CD8-positive, alpha-beta T cell (primary cell): ENCODE measurements at regions of chr1 and their contacts with region 1.

Region 1: DNA sequence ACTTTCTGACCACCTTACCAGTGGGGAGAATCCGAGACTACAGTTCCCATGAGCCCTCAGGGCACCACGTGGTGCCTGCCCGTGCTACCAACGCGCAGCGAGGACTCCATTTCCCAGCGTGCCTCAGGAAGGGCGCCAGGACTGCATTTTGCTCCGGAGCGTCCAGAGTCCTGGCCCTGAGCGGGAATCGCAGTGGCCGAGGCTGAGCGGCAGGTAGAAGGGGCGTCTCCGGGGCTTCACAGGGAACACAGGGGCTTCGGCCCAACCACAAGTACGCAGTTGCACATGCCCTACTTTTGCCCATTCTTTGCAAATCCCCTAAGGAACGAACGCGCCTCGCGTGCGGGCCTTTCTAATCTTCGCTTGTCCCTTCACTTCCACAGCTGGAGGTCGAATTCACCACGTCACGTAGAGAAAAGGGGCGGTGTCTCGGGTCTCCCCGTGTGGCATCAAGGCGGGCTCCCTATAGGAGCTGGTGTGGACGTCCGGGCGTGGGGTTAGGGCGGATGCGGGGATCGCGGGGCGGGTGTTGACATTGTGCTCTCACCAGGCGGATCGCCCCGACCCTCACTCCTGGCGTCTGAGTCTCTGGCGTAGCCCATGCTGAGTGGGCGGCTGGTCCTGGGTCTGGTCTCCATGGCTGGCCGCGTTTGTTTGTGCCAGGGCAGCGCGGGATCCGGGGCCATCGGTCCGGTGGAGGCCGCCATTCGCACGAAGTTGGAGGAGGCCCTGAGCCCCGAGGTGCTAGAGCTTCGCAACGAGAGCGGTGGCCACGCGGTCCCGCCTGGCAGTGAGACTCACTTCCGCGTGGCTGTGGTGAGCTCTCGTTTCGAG is at the start of gene BOLA1:
- DNase-seq: peak; percentile 56 to 91 (median 85)
- ATAC-seq: peak; percentile 96
- H3K4me3 ChIP-seq: peak within 1 kb of the TSS; percentile 67 to 73
- H3K4me3 Mint-ChIP-seq: peak within 1 kb of the TSS; percentile 89
- H3K27ac ChIP-seq: peak within 1 kb of the TSS; percentile 66 to 82
- H3K27ac Mint-ChIP-seq: peak within 1 kb of the TSS; percentile 92
- H3K4me1 ChIP-seq: peaks cover 11% of the 10 kb centered on the region
- H3K4me1 Mint-ChIP-seq: peaks cover 18% of the 10 kb centered on the region
- H3K27me3 ChIP-seq: no peaks in the 10 kb centered on the region
- H3K27me3 Mint-ChIP-seq: no peaks in the 10 kb centered on the region
- CTCF ChIP-seq: no peak
- total RNA-seq, gene BOLA1: 3.3 to 4.0 TPM

Region 2: GRCh38 chr1:149844101-149844500 is 55.6 kb before region 1 on chr1:
- CTCF ChIA-PET with region 1: no interaction called
- POLR2A ChIA-PET with region 1: no interaction called
- intact Hi-C with region 1: no loop called
- DNase-seq: peak in 4 of 9 experiments; percentile 13 to 56 (median 30)
- ATAC-seq: no peak
- H3K4me3 ChIP-seq: peak overlapping the region; percentile 49 to 57
- H3K4me3 Mint-ChIP-seq: peak overlapping the region; percentile 85
- H3K27ac ChIP-seq: peak overlapping the region; percentile 43 to 62
- H3K27ac Mint-ChIP-seq: peak overlapping the region; percentile 93
- H3K4me1 ChIP-seq: peaks cover 43% of the 10 kb centered on the region
- H3K4me1 Mint-ChIP-seq: peaks cover 51% of the 10 kb centered on the region
- H3K27me3 ChIP-seq: no peaks in the 10 kb centered on the region
- H3K27me3 Mint-ChIP-seq: no peaks in the 10 kb centered on the region
- CTCF ChIP-seq: no peak

Region 3: GRCh38 chr1:149917571-149918144 is 18.0 kb after region 1 on chr1 and contains the start of gene SV2A:
- CTCF ChIA-PET with region 1: no interaction called
- POLR2A ChIA-PET with region 1: interaction called, 4 read pairs
- intact Hi-C with region 1: loop called (anchors 1 to 2 kb)
- DNase-seq: peak in 8 of 9 experiments; percentile 12 to 68 (median 52)
- ATAC-seq: peak; percentile 81
- H3K4me3 ChIP-seq: peak within 1 kb of the TSS; percentile 57 to 66
- H3K4me3 Mint-ChIP-seq: peak within 1 kb of the TSS; percentile 90
- H3K27ac ChIP-seq: no peak within 1 kb of the TSS
- H3K27ac Mint-ChIP-seq: peak within 1 kb of the TSS; percentile 49
- H3K4me1 ChIP-seq: peaks cover 34% of the 10 kb centered on the region
- H3K4me1 Mint-ChIP-seq: peaks cover 46% of the 10 kb centered on the region
- H3K27me3 ChIP-seq: no peaks in the 10 kb centered on the region
- H3K27me3 Mint-ChIP-seq: no peaks in the 10 kb centered on the region
- CTCF ChIP-seq: no peak
- total RNA-seq, gene SV2A: 2.9 to 3.3 TPM